Activated CD4-positive, alpha-beta memory T cell treated with anti-CD3 and anti-CD28 coated beads, Interleukin-2, amount 10 ng/mL, durations not matched to agents 7 days and 5 days (primary cell): ENCODE measurements at regions of chr3 and their contacts with region 1.

Region 1: GRCh38 chr3:98556164-98557130 is 24.7 kb downstream of the GPR15 start:
- DNase-seq: peak; percentile 88
- H3K4me3 Mint-ChIP-seq: peak overlapping the region; percentile 82
- H3K27ac Mint-ChIP-seq: peak overlapping the region; percentile 100
- H3K4me1 Mint-ChIP-seq: peaks cover 87% of the 10 kb centered on the region
- H3K27me3 Mint-ChIP-seq: no peaks in the 10 kb centered on the region

Region 2: GRCh38 chr3:98522244-98523090 is 34.0 kb before region 1 on chr3 and contains the start of gene CLDND1:
- CTCF ChIA-PET with region 1: interaction called, 21 read pairs
- POLR2A ChIA-PET with region 1: interaction called, 372 read pairs
- DNase-seq: peak; percentile 98
- H3K4me3 Mint-ChIP-seq: peak within 1 kb of the TSS; percentile 98
- H3K27ac Mint-ChIP-seq: peak within 1 kb of the TSS; percentile 92
- H3K4me1 Mint-ChIP-seq: peaks cover 74% of the 10 kb centered on the region
- H3K27me3 Mint-ChIP-seq: no peaks in the 10 kb centered on the region
- total RNA-seq, gene CLDND1: 673 to 683 TPM

Region 3: DNA sequence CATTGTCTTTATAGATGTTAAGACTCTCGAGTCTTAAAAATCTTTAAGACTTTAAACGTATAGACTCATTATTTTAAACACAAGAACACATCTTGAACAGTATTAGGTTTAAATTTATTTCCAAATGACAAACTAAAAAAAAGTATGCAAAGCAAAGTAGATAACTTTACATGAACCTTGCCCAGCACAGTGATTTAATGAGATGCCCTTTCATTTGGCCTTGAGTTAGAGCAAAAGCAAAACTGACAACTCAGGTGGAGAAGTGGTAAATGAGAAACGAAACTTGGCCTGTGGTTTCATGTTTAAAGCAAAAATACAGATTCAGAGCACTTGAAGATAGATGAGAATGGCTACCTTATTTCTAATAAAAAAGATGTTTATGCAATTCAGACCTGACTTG is 16.1 kb before region 1 on chr3:
- CTCF ChIA-PET with region 1: interaction called, 15 read pairs
- POLR2A ChIA-PET with region 1: interaction called, 931 read pairs
- DNase-seq: no peak
- H3K4me3 Mint-ChIP-seq: peak overlapping the region; percentile 23
- H3K27ac Mint-ChIP-seq: peak overlapping the region; percentile 80
- H3K4me1 Mint-ChIP-seq: peaks cover 71% of the 10 kb centered on the region
- H3K27me3 Mint-ChIP-seq: no peaks in the 10 kb centered on the region

Region 4: GRCh38 chr3:98545940-98546339 is 10.5 kb before region 1 on chr3:
- CTCF ChIA-PET with region 1: interaction called, 8 read pairs
- POLR2A ChIA-PET with region 1: interaction called, 931 read pairs
- DNase-seq: no peak
- H3K4me3 Mint-ChIP-seq: peak overlapping the region; percentile 58
- H3K27ac Mint-ChIP-seq: peak overlapping the region; percentile 94
- H3K4me1 Mint-ChIP-seq: peaks cover 72% of the 10 kb centered on the region
- H3K27me3 Mint-ChIP-seq: no peaks in the 10 kb centered on the region